Common myeloid progenitor, CD34-positive (primary cell): ENCODE measurements at regions of chr3 and their contacts with region 1.

Region 1: GRCh38 chr3:115147329-115148141 is 447 bp upstream of the ZBTB20 start:
- DNase-seq: peak; percentile 100
- H3K4me3 ChIP-seq: peak overlapping the region; percentile 57 to 94 (median 82)
- H3K27ac ChIP-seq: peak overlapping the region; percentile 95 to 98
- H3K4me1 ChIP-seq: peaks cover 4 to 23% (median 14%) of the 10 kb centered on the region in 4 experiments
- H3K27me3 ChIP-seq: no peaks in the 10 kb centered on the region

Region 2: GRCh38 chr3:115099986-115100571 is 47.5 kb before region 1 on chr3:
- CTCF ChIA-PET with region 1: interaction called, 4 read pairs
- POLR2A ChIA-PET with region 1: interaction called, 16 read pairs
- DNase-seq: peak; percentile 61 to 81 (median 64)
- H3K4me3 ChIP-seq: peak overlapping the region in 6 of 7 experiments; percentile 25 to 84 (median 78)
- H3K27ac ChIP-seq: peak overlapping the region; percentile 75 to 85
- H3K4me1 ChIP-seq: peaks cover 5 to 33% (median 16%) of the 10 kb centered on the region in 4 experiments
- H3K27me3 ChIP-seq: no peaks in the 10 kb centered on the region